ENCODE measurements at regions of chr6 and their contacts with region 1.

Region 1: DNA sequence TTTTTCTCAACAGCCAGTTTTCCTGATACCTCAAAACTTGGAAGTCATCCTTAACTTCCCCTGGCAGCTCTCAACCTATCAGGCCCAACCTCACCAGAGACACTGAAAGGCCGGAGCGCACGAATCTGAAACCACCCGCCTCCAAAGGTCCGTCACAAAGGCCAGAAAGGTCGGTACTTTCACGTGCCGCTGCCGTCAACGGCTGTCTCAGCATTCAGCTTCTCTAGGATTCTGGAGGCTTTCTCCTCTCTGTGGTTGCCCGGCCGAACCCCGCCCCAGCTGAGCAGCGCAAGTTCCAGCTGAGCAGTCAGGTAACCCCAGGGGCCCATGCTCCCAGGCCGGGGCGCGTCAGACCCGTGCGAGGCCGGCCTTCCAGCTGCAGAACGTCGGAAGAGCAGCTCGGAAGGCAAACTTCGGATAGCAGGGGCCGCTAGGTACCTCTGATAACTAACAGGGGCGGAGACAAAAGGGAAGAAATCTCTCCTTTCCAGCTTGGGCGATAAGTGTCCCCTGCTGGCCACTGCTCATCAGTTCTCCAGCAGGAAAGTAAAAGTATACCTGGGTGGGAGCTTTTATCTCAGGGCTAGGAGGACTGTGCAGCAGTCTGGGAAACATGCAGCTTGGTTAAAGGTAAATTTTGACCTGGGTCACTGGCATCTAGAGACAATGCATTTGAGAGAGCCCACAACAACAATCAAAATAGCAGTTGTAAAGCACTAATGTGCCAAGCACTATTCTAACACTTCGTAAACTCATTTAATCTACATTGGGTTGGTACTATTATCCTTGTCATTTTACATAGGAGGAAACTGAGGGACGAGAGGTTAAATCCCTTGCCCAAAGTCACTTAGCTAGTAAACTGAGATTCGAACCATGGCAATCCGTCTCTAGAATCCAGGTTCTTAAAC is 16.1 kb downstream of the ZSCAN12 start:
- DNase-seq: peak; percentile 89
- ATAC-seq: peak; percentile 93
- H3K4me3 ChIP-seq: peak overlapping the region; percentile 78
- H3K27ac ChIP-seq: peak overlapping the region; percentile 38
- H3K4me1 ChIP-seq: peaks cover 12% of the 10 kb centered on the region
- H3K27me3 ChIP-seq: no peaks in the 10 kb centered on the region
- CTCF ChIP-seq: peak; percentile 80

Region 2: GRCh38 chr6:28124102-28124970 is 259.2 kb before region 1 on chr6 and contains the start of gene ZSCAN16:
- CTCF ChIA-PET with region 1: no interaction called
- POLR2A ChIA-PET with region 1: no interaction called
- intact Hi-C with region 1: loop called (anchors 1 kb)
- DNase-seq: peak; percentile 91
- ATAC-seq: peak; percentile 99
- H3K4me3 ChIP-seq: peak within 1 kb of the TSS; percentile 85
- H3K27ac ChIP-seq: no peak within 1 kb of the TSS
- H3K4me1 ChIP-seq: peaks cover 9% of the 10 kb centered on the region; the same call in 1 of the 2 replicates
- H3K27me3 ChIP-seq: no peaks in the 10 kb centered on the region
- CTCF ChIP-seq: no peak
- total RNA-seq, gene ZSCAN16: 4.5 and 8.1 TPM in 2 replicates

Measured in PC-3 (cell line).